Right cardiac atrium (tissue), 5 donors: ENCODE measurements at regions of chr3 and their contacts with region 1.

Region 1: DNA sequence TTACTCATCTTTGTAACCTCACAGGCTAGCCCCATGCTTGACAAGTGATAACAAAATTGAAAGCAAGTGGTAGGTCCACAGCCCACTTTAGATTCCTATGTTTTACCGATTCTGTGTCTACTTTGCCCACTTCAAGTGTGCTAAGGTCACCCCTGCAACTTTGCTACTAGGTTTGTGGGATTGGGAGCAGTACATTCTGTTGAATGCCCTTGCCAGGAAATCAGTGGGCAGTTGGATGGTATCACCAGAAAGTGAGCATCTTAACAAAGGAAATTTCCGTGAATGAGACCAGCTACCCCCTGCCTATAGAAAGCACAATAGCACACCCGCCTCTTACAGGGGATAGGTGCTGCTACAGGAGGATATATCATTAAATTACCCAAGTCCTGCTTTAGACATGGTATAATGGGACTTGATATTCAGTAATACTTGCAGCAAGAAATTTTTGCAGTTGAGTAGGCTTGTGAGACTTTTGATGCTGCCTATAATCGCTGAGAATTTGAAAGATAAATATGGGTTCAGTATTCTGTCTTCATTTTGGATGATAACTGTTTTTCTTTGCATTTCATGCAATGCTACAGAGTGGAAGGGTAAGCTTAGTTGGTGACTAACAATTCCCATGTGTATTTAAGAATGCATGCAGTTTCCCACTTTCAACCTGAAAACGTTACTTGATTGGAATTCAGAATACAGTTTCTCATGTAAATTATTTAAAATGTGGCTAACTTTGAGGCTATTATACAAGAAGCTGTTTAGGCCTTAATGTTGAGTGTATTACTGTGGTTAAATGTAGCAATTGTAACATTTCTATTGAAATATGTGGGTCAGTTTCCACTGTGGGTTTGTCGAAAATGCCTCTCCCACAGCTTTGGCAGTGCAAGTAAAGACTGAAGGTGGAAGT is 9.5 kb downstream of the EBLN2 start:
- DNase-seq: no peak
- ATAC-seq: peak in 1 of 2 donors; percentile 17
- H3K4me3 ChIP-seq: no peak overlapping the region
- H3K27ac ChIP-seq: no peak overlapping the region
- H3K4me1 ChIP-seq: no peaks in the 10 kb centered on the region
- H3K27me3 ChIP-seq: no peaks in the 10 kb centered on the region

Region 2: GRCh38 chr3:72797773-72798543 is 273.0 kb before region 1 on chr3:
- intact Hi-C with region 1: no loop called
- DNase-seq: peak; percentile 50 to 81 (median 77)
- ATAC-seq: peak; percentile 71 to 84
- H3K4me3 ChIP-seq: no peak overlapping the region
- H3K27ac ChIP-seq: peak overlapping the region; percentile 12
- H3K4me1 ChIP-seq: peaks cover 7% of the 10 kb centered on the region
- H3K27me3 ChIP-seq: no peaks in the 10 kb centered on the region

Region 3: GRCh38 chr3:72847751-72848702 is 222.9 kb before region 1 on chr3 and contains the start of gene SHQ1:
- intact Hi-C with region 1: loop called in 2 of 4 experiments (anchors 10 kb)
- DNase-seq: peak; percentile 97 to 99 (median 98)
- ATAC-seq: peak; percentile 99
- H3K4me3 ChIP-seq: peak within 1 kb of the TSS; percentile 96
- H3K27ac ChIP-seq: peak within 1 kb of the TSS; percentile 90
- H3K4me1 ChIP-seq: no peaks in the 10 kb centered on the region
- H3K27me3 ChIP-seq: no peaks in the 10 kb centered on the region
- total RNA-seq, gene SHQ1: 21.0 to 27.1 (median 22.8) TPM

Region 4: DNA sequence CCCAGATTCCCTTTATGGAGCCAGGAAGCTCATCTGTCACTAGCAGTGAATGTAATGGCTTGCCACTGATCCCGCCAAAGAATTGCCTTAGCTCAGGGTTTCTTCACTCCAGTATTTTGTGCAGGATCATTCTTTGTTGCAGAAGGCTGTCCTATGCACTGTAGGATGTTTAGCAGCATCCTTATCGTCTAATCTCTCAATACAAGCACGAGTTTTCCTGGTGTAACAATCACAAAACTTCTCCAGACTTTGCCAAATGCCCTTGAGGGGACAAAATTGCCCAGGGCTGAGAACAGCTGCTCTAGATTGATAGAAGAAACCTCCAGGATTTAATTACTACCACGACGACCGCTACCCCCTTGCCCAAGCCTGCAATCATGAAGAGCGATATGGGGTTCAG is 215.9 kb before region 1 on chr3:
- intact Hi-C with region 1: loop called in 1 of 4 experiments (anchors 10 kb)
- DNase-seq: no peak
- ATAC-seq: no peak
- H3K4me3 ChIP-seq: no peak overlapping the region
- H3K27ac ChIP-seq: no peak overlapping the region
- H3K4me1 ChIP-seq: no peaks in the 10 kb centered on the region
- H3K27me3 ChIP-seq: no peaks in the 10 kb centered on the region